BJ (cell line): ENCODE measurements at regions of chr10 and their contacts with region 1.

Region 1: DNA sequence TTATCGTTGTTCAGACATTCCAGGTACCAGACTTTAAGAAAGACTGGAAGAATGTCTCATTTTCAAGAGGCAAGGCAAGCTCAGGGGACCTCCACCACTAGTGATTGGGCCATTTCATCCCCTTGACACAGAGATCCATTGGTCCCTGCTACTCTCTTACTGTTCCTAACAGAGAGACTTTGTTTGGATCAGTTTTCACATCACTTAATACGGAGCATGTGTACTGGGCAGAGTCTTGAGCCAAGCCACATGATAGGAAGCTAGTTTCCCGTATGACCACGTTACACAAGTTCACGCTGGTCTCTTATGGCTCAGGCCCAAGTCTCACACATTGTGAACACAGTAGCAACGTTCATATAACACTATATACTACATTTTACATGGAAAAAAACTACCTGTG is 269.9 kb downstream of the BAMBI start:
- DNase-seq: no peak
- H3K4me3 ChIP-seq: no peak overlapping the region
- H3K27me3 ChIP-seq: peaks cover 3% of the 10 kb centered on the region
- CTCF ChIP-seq: no peak

Region 2: GRCh38 chr10:28871665-28872064 is 75.5 kb before region 1 on chr10:
- CTCF ChIA-PET with region 1: no interaction called
- POLR2A ChIA-PET with region 1: no interaction called
- DNase-seq: no peak
- H3K4me3 ChIP-seq: no peak overlapping the region
- H3K27me3 ChIP-seq: no peaks in the 10 kb centered on the region
- CTCF ChIP-seq: no peak

Region 3: GRCh38 chr10:28906934-28907333 is 40.2 kb before region 1 on chr10:
- CTCF ChIA-PET with region 1: no interaction called
- POLR2A ChIA-PET with region 1: no interaction called
- DNase-seq: no peak
- H3K4me3 ChIP-seq: no peak overlapping the region
- H3K27me3 ChIP-seq: no peaks in the 10 kb centered on the region
- CTCF ChIP-seq: no peak

Region 4: GRCh38 chr10:28959850-28960501 is 12.8 kb after region 1 on chr10:
- CTCF ChIA-PET with region 1: no interaction called
- POLR2A ChIA-PET with region 1: no interaction called
- DNase-seq: no peak
- H3K4me3 ChIP-seq: no peak overlapping the region
- H3K27me3 ChIP-seq: no peaks in the 10 kb centered on the region
- CTCF ChIP-seq: no peak

Region 5: GRCh38 chr10:29056729-29057128 is 109.6 kb after region 1 on chr10:
- CTCF ChIA-PET with region 1: no interaction called
- POLR2A ChIA-PET with region 1: interaction called, 10 read pairs
- DNase-seq: no peak
- H3K4me3 ChIP-seq: no peak overlapping the region
- H3K27me3 ChIP-seq: peaks cover 4% of the 10 kb centered on the region
- CTCF ChIP-seq: no peak

Region 6: GRCh38 chr10:29105531-29106215 is 158.5 kb after region 1 on chr10:
- CTCF ChIA-PET with region 1: no interaction called
- POLR2A ChIA-PET with region 1: no interaction called
- DNase-seq: peak; percentile 35
- H3K4me3 ChIP-seq: no peak overlapping the region
- H3K27me3 ChIP-seq: no peaks in the 10 kb centered on the region
- CTCF ChIP-seq: no peak